Heart left ventricle (tissue), 16 donors: ENCODE measurements at regions of chr13 and their contacts with region 1.

Region 1: GRCh38 chr13:48571126-48571913 is 38.4 kb upstream of the RCBTB2 start:
- DNase-seq: peak in 1 of 5 donors; percentile 51
- ATAC-seq: peak; percentile 39 to 76 (median 57)
- H3K4me3 ChIP-seq: peak overlapping the region in 8 of 12 donors; percentile 11 to 42 (median 28)
- H3K27ac ChIP-seq: peak overlapping the region; percentile 72 to 90 (median 82)
- H3K4me1 ChIP-seq: peaks cover 3 to 95% (median 55%) of the 10 kb centered on the region in 12 donors
- H3K27me3 ChIP-seq: no peaks in the 10 kb centered on the region
- CTCF ChIP-seq: no peak
- POLR2A ChIP-seq: no peak

Region 2: GRCh38 chr13:48492470-48493065 is 78.8 kb before region 1 on chr13:
- intact Hi-C with region 1: loop called in 3 of 10 experiments (anchors 5 to 10 kb)
- DNase-seq: peak; percentile 86 to 90 (median 88)
- ATAC-seq: peak; percentile 89 to 95 (median 92)
- H3K4me3 ChIP-seq: peak overlapping the region in 10 of 12 donors; percentile 21 to 55 (median 43)
- H3K27ac ChIP-seq: peak overlapping the region; percentile 55 to 93 (median 76)
- H3K4me1 ChIP-seq: peaks cover 0 to 80% (median 24%) of the 10 kb centered on the region in 12 donors
- H3K27me3 ChIP-seq: no peaks in the 10 kb centered on the region
- CTCF ChIP-seq: no peak
- POLR2A ChIP-seq: no peak

Region 3: DNA sequence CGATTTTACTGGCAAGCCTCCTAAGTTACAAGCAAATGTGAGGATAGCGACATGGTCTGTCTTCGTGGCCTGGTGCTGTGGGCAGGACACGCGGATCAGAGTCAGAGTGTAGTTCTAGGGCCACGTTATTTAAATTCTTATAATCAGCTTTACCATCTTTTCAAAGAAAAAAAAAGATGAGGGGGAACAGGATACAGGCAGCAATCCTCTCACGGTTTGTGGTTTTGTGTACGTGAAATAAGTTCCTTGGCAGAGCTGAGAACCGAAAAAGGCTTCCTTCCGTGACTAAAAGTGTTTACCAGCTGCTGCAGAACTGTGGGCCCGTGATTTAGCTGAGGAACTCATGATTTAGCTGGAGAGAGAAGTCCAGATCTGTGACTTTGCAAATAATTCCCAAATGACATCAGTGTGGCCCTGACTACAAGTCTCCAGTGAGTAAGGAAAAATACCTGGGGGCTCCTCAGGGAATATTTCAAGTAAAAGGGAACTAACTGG is 65.7 kb before region 1 on chr13:
- intact Hi-C with region 1: loop called in 2 of 10 experiments (anchors 5 to 10 kb)
- DNase-seq: peak in 4 of 5 donors; percentile 47 to 70 (median 62)
- ATAC-seq: peak; percentile 69 to 84 (median 72)
- H3K4me3 ChIP-seq: peak overlapping the region in 7 of 12 donors; percentile 1 to 30 (median 23)
- H3K27ac ChIP-seq: peak overlapping the region; percentile 62 to 96 (median 82)
- H3K4me1 ChIP-seq: peaks cover 0 to 79% (median 29%) of the 10 kb centered on the region in 12 donors
- H3K27me3 ChIP-seq: no peaks in the 10 kb centered on the region
- CTCF ChIP-seq: no peak
- POLR2A ChIP-seq: no peak

Region 4: DNA sequence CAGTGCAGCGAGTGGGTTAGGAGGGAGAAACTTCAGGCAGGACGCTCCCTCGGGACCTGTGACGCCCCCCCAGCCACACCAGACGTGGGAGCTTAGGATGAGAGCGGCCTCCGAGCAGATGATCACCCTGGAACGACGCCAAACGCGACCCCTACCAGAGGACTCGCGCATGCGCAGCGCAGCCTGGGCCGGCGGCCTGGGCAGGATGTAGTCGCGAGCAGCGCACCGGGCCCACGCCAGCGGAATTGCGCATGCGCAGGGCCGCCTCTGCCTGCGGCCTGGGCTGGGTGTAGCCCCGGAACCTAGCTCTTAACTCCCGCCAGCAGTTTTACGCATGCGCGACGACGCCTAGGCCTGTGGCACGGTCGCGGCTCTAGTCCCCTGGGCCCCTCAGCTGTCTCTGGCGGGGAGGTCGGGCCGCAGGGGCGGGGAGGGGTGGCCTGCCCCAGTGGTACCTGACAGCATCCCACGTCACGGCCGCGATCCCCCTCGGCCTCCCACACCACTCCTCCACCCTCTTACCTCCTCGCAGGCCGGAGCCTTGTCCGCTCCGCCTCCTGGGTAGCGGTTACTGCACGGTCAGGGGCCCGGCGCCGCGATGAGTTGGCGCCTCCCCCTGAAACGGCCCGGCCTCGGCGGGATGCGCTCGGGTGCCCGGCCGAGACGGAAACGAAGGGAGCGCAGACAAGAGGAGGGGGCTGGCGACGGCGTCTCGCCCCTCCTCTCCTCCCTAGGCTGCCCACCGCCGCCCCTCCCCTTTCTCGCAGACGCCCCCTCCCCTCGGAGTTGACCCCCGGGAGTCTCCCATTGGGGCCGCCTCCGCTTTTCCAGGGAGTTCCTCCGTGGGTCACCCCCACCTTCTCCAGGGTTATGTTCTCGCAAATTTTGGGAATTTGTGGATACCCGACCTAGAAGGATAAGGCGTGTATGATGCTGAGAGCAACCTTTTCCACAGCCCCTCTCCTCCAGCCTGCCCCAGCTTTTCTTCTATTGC is 38.5 kb before region 1 on chr13 and contains the start of gene RCBTB2:
- intact Hi-C with region 1: loop called in 5 of 10 experiments (anchors 5 kb)
- DNase-seq: peak; percentile 99 to 100 (median 99)
- ATAC-seq: peak; percentile 97 to 98 (median 97)
- H3K4me3 ChIP-seq: peak within 1 kb of the TSS; percentile 33 to 90 (median 72)
- H3K27ac ChIP-seq: peak within 1 kb of the TSS; percentile 95 to 99 (median 98)
- H3K4me1 ChIP-seq: peaks cover 0 to 73% (median 20%) of the 10 kb centered on the region in 12 donors
- H3K27me3 ChIP-seq: no peaks in the 10 kb centered on the region
- CTCF ChIP-seq: peak in 1 of 12 donors; percentile 10
- POLR2A ChIP-seq: peak in 1 of 2 donors; percentile 87
- total RNA-seq, gene RCBTB2: 5.9 to 16.2 (median 11.8) TPM